Endothelial cell of umbilical vein (primary cell): ENCODE measurements at regions of chr3 and their contacts with region 1.

Region 1: GRCh38 chr3:46276502-46277099 is 34.3 kb downstream of the CCR3 start:
- DNase-seq: peak; percentile 48
- H3K4me3 ChIP-seq: no peak overlapping the region
- H3K27ac ChIP-seq: no peak overlapping the region
- H3K4me1 ChIP-seq: no peaks in the 10 kb centered on the region
- H3K27me3 ChIP-seq: no peaks in the 10 kb centered on the region
- CTCF ChIP-seq: peak; percentile 59 to 77
- POLR2A ChIP-seq: no peak

Region 2: DNA sequence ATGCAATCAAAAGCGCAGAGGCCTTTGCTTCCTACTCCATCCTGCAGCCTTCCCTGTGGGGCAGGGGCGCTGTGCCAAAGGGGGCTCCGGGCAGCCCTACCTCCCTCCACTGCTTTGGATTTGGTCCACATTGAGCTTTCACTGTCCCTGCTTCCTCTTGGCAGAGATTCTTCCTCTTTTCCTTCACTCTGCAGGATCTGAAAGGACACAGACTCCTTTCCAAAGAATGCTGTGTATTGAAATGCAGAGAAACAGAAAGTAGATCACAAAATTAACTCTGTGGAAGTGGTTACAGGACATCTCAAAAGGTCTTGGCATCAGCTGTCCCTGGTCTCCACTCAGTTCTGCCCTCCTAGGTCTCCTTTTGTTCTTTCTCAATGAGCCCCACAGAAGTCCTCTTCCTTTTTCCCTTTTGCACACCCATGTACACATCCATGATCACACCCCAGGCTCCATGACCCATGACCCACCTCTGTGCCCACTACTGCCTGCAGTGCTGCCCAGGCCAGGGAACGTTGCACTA is 132.6 kb before region 1 on chr3:
- CTCF ChIA-PET with region 1: no interaction called
- POLR2A ChIA-PET with region 1: no interaction called
- dilution Hi-C with region 1: no loop called
- intact Hi-C with region 1: no loop called
- DNase-seq: no peak
- H3K4me3 ChIP-seq: no peak overlapping the region
- H3K27ac ChIP-seq: no peak overlapping the region
- H3K4me1 ChIP-seq: no peaks in the 10 kb centered on the region
- H3K27me3 ChIP-seq: no peaks in the 10 kb centered on the region
- CTCF ChIP-seq: no peak
- POLR2A ChIP-seq: no peak

Region 3: DNA sequence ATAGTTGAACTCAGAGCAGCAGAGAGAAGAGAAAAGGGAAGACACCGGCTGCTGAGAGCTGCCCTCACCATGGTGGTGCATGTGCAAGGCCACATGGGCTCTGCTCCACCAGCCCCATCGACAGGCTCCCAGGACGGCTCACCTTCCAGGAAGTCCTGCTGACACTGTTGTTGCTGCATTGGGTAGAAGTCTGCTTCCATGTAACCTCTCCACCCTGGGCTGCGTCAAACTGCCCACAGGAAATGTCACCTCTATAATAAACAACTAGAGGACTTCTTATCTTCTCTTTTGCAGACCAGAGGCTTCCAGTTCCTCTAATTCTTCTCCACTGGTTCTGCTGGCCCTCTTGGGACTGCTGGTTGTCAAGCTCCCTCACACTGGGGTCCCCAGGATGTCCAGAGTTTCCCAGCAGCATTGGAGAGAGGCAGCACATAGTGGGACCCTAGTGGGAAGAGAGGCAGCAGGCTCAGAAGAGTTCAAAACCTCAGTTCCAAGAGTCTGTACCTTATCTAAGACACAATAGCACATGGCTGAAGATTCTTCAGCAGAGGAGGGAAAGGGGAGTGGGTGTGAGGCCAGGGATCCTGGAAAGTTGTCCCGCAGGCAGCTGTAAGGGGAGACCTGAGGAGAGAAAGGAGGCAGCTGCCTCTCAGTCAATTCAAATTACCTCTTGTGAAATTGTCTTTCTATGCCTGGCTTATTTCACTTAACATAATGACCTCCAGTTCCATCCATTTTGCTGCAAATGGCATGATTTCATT is 40.1 kb before region 1 on chr3:
- CTCF ChIA-PET with region 1: no interaction called
- POLR2A ChIA-PET with region 1: no interaction called
- dilution Hi-C with region 1: no loop called
- intact Hi-C with region 1: no loop called
- DNase-seq: no peak
- H3K4me3 ChIP-seq: no peak overlapping the region
- H3K27ac ChIP-seq: no peak overlapping the region
- H3K4me1 ChIP-seq: no peaks in the 10 kb centered on the region
- H3K27me3 ChIP-seq: peaks cover 0 to 3% of the 10 kb centered on the region in 2 experiments
- CTCF ChIP-seq: no peak
- POLR2A ChIP-seq: no peak

Region 4: DNA sequence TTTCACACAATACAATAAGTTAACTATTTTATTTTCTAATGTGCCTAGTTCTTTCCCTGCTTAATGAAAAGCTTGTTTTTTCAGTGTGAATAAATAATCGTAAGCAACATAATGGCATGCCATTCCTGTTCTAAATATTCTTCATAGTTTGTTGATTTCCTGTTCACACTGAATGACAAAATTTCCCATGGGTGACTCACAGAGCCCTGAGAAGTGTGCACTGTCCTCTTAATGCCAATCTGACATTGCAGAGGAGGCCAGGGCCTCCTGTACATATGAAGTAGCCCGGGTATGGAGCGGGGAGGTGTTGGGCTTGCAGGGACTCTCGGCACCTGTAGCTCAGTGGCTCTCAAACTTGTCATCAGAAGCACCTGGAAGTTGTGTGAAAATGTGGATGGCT is 10.0 kb before region 1 on chr3:
- CTCF ChIA-PET with region 1: interaction called, 21 read pairs
- POLR2A ChIA-PET with region 1: no interaction called
- dilution Hi-C with region 1: no loop called
- intact Hi-C with region 1: no loop called
- DNase-seq: no peak
- H3K4me3 ChIP-seq: no peak overlapping the region
- H3K27ac ChIP-seq: no peak overlapping the region
- H3K4me1 ChIP-seq: no peaks in the 10 kb centered on the region
- H3K27me3 ChIP-seq: peaks cover 0 to 3% of the 10 kb centered on the region in 2 experiments
- CTCF ChIP-seq: no peak
- POLR2A ChIP-seq: no peak

Region 5: GRCh38 chr3:46378426-46378942 is 101.9 kb after region 1 on chr3:
- CTCF ChIA-PET with region 1: interaction called, 95 read pairs
- POLR2A ChIA-PET with region 1: no interaction called
- dilution Hi-C with region 1: no loop called
- intact Hi-C with region 1: loop called (anchors 1 kb)
- DNase-seq: peak; percentile 56
- H3K4me3 ChIP-seq: no peak overlapping the region
- H3K27ac ChIP-seq: no peak overlapping the region
- H3K4me1 ChIP-seq: no peaks in the 10 kb centered on the region
- H3K27me3 ChIP-seq: peaks cover 8 to 13% of the 10 kb centered on the region in 2 experiments
- CTCF ChIP-seq: peak; percentile 76 to 82
- POLR2A ChIP-seq: no peak

Region 6: DNA sequence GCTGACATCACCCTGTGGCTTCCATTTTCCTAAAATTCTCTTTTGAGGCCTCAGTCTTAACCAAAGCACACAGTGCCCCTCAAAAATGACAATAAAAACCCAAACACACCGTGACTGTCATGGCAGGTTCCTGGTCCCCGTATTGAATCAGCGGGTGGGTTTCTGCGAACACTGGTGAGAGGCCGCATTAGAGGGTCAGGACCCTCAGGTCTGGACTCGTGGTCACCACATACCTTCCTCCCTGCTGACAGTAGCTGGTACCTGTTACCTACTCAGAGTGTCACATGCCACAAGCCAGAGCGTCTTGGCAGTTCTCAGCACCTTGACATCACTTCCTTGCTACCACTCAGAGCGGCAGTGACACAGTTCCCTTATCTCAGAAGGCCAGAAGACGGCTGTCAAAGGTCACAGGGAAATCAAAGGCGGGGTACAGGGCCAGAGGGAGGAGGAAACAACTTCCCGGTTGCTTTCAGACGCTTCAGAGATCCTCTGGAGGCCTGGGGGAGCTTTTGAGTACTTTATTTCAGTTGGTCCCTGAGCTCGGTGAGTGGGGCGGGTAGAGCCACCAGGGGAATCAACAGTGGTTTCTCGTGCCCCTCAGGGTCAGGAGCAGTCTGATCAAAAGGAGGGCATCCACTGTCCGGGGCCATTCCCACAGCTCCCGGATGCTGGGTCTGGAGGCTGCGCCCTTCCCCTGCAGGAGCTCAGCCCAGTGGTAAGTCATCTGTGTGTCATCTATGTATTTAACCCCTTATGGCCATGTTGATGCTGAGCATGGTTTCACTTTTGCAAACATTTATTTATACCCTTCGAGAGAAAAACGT is 130.4 kb after region 1 on chr3 and contains the starts of genes CCR5AS and CCRL2:
- CTCF ChIA-PET with region 1: interaction called, 11 read pairs
- POLR2A ChIA-PET with region 1: no interaction called
- dilution Hi-C with region 1: no loop called
- intact Hi-C with region 1: no loop called
- DNase-seq: peak; percentile 86
- H3K4me3 ChIP-seq: peak within 1 kb of the TSS; percentile 19 to 67 (median 23)
- H3K27ac ChIP-seq: peak within 1 kb of the TSS; percentile 63
- H3K4me1 ChIP-seq: peaks cover 41% of the 10 kb centered on the region
- H3K27me3 ChIP-seq: no peaks in the 10 kb centered on the region
- CTCF ChIP-seq: no peak
- POLR2A ChIP-seq: peak; percentile 35
- total RNA-seq, gene CCRL2: 3.9 and 6.4 TPM in 2 replicates

Region 7: DNA sequence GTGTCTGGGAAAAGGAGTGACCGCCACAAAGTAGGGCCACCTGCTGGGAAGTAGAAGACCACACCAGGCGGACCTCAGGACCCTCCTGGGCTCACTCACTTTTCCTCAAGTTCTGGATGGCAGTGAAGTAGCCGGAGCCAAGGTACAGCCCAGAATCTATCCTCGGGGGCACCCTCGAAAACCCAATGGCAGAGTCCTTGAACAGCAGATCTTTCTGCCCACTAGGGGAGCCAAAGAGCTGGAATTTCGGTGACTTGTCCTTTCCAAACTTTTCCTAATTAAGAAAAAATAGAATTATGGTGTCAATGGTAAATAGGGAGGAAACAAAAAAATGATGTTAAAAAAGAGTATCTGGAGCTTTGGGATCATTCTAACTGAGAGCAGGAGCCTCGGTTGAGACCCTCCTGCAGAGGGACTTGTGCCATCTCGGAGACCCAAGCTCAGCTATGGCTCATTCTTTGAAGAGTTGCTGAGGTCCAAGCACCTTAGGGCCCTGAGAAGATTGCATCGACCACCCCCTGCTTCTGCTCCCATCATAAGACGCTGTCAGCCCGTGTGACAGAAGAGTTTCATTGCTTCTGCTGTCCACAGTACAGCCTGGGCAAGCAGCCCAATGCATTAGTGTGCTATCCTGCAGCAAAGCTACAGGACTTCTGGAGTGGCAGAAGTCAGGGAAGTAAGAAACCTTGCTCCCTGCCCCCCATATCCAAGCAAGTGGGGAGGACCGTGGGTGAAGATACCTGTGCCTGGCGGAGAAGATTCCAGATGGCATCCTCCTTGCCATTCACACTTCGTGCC is 173.4 kb after region 1 on chr3:
- CTCF ChIA-PET with region 1: interaction called, 17 read pairs
- POLR2A ChIA-PET with region 1: no interaction called
- dilution Hi-C with region 1: no loop called
- intact Hi-C with region 1: no loop called
- DNase-seq: no peak
- H3K4me3 ChIP-seq: no peak overlapping the region
- H3K27ac ChIP-seq: no peak overlapping the region
- H3K4me1 ChIP-seq: no peaks in the 10 kb centered on the region
- H3K27me3 ChIP-seq: peaks cover 0 to 8% of the 10 kb centered on the region in 2 experiments
- CTCF ChIP-seq: peak; percentile 62 to 65
- POLR2A ChIP-seq: no peak